Common myeloid progenitor, CD34-positive (primary cell): ENCODE measurements at regions of chr20 and their contacts with region 1.

Region 1: GRCh38 chr20:24992487-24993205 is at the start of gene APMAP:
- DNase-seq: peak; percentile 93 to 96 (median 95)
- H3K4me3 ChIP-seq: peak within 1 kb of the TSS; percentile 48 to 93 (median 87)
- H3K27ac ChIP-seq: peak within 1 kb of the TSS; percentile 51 to 86
- H3K4me1 ChIP-seq: peaks cover 2 to 46% (median 35%) of the 10 kb centered on the region in 4 experiments
- H3K27me3 ChIP-seq: no peaks in the 10 kb centered on the region

Region 2: GRCh38 chr20:24934101-24934661 is 58.5 kb before region 1 on chr20:
- CTCF ChIA-PET with region 1: interaction called, 10 read pairs
- POLR2A ChIA-PET with region 1: interaction called, 3 read pairs
- DNase-seq: no peak
- H3K4me3 ChIP-seq: no peak overlapping the region
- H3K27ac ChIP-seq: no peak overlapping the region
- H3K4me1 ChIP-seq: peaks cover 0 to 40% (median 31%) of the 10 kb centered on the region in 4 experiments
- H3K27me3 ChIP-seq: no peaks in the 10 kb centered on the region

Region 3: DNA sequence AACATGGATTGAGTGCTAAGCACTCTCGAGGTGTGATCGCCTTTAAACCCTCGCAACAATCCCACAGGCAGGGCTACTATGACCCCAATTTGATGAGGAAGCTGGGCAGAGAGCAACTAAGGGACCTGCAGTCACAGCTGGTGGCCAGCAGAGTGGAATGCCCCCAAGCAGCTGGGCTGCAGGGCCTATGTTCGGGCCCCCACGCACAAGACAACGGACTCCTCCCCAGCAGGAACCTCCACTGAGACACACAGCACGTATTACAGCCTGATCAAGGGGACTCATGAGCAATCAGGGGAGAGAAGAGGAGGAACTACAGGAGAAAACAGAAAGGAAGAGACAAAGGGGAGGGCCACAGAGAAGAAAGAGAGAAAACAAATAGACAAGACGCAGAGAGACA is 21.9 kb before region 1 on chr20:
- CTCF ChIA-PET with region 1: no interaction called
- POLR2A ChIA-PET with region 1: no interaction called
- DNase-seq: no peak
- H3K4me3 ChIP-seq: no peak overlapping the region
- H3K27ac ChIP-seq: no peak overlapping the region
- H3K4me1 ChIP-seq: no peaks in the 10 kb centered on the region
- H3K27me3 ChIP-seq: no peaks in the 10 kb centered on the region

Region 4: GRCh38 chr20:25005220-25005619 is 12.6 kb after region 1 on chr20:
- CTCF ChIA-PET with region 1: interaction called, 22 read pairs
- POLR2A ChIA-PET with region 1: no interaction called
- DNase-seq: no peak
- H3K4me3 ChIP-seq: no peak overlapping the region
- H3K27ac ChIP-seq: no peak overlapping the region
- H3K4me1 ChIP-seq: peaks cover 0 to 5% (median 2%) of the 10 kb centered on the region in 4 experiments
- H3K27me3 ChIP-seq: no peaks in the 10 kb centered on the region

Region 5: GRCh38 chr20:25022687-25023086 is 30.0 kb after region 1 on chr20:
- CTCF ChIA-PET with region 1: interaction called, 10 read pairs
- POLR2A ChIA-PET with region 1: no interaction called
- DNase-seq: no peak
- H3K4me3 ChIP-seq: no peak overlapping the region
- H3K27ac ChIP-seq: no peak overlapping the region
- H3K4me1 ChIP-seq: peaks cover 0 to 10% (median 8%) of the 10 kb centered on the region in 4 experiments
- H3K27me3 ChIP-seq: no peaks in the 10 kb centered on the region

Region 6: DNA sequence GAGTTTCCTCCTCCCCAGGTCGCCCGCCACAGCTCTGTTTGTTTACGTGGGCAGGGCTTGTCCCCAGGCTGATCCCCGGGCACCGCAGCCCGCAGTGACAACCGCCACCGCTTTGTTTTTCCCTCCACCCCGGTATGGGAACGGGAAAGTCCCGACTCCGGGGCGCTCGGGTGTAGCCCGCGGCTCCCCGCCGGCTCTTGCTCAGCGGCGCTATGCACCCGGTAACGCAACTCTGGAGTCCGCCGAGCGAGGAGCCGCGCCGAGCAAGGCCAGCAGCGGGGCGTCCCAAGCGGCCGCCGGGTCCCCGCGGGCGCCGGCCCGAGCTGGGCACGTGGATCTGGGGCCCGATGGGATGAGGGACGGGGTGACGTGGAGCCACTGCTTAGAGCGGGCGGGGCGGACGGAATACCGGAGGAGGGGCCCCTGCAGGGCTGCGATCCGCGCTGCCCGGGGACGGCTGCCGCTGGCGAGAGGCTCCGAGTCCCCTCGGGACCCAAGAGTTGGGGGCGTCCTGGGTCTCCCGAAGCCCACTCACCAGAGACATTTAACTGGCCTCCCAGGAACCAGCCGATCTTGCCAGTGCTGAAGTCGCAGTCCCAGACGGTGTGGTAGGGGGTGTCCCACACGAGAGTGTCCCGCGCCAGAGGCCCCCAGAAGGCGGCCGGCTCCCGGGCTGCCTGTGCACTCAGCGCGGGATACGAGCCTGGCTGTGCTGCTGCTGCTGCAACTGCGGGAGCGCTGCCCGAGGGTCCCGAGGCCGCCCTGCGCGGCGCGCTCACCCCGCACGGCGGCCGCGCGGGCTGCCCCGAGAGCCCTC is 64.8 kb after region 1 on chr20:
- CTCF ChIA-PET with region 1: interaction called, 160 read pairs
- POLR2A ChIA-PET with region 1: interaction called, 3 read pairs
- DNase-seq: peak; percentile 69 to 89 (median 88)
- H3K4me3 ChIP-seq: peak overlapping the region; percentile 67 to 87 (median 75)
- H3K27ac ChIP-seq: peak overlapping the region; percentile 64 to 74
- H3K4me1 ChIP-seq: peaks cover 9 to 65% (median 59%) of the 10 kb centered on the region in 4 experiments
- H3K27me3 ChIP-seq: peaks cover 0 to 5% (median 0%) of the 10 kb centered on the region in 5 experiments

Region 7: GRCh38 chr20:25065625-25066338 is 73.1 kb after region 1 on chr20:
- CTCF ChIA-PET with region 1: interaction called, 160 read pairs
- POLR2A ChIA-PET with region 1: interaction called, 3 read pairs
- DNase-seq: peak; percentile 73 to 85 (median 80)
- H3K4me3 ChIP-seq: no peak overlapping the region
- H3K27ac ChIP-seq: no peak overlapping the region
- H3K4me1 ChIP-seq: no peaks in the 10 kb centered on the region
- H3K27me3 ChIP-seq: peaks cover 0 to 18% (median 10%) of the 10 kb centered on the region in 5 experiments

Region 8: GRCh38 chr20:25076731-25077609 is 84.3 kb after region 1 on chr20:
- CTCF ChIA-PET with region 1: interaction called, 16 read pairs
- POLR2A ChIA-PET with region 1: no interaction called
- DNase-seq: peak in 2 of 3 donors; percentile 43 to 58
- H3K4me3 ChIP-seq: peak overlapping the region in 2 of 7 experiments; percentile 11 to 51
- H3K27ac ChIP-seq: no peak overlapping the region
- H3K4me1 ChIP-seq: peaks cover 0 to 18% (median 7%) of the 10 kb centered on the region in 4 experiments
- H3K27me3 ChIP-seq: peaks cover 18 to 90% (median 48%) of the 10 kb centered on the region in 5 experiments

Region 9: DNA sequence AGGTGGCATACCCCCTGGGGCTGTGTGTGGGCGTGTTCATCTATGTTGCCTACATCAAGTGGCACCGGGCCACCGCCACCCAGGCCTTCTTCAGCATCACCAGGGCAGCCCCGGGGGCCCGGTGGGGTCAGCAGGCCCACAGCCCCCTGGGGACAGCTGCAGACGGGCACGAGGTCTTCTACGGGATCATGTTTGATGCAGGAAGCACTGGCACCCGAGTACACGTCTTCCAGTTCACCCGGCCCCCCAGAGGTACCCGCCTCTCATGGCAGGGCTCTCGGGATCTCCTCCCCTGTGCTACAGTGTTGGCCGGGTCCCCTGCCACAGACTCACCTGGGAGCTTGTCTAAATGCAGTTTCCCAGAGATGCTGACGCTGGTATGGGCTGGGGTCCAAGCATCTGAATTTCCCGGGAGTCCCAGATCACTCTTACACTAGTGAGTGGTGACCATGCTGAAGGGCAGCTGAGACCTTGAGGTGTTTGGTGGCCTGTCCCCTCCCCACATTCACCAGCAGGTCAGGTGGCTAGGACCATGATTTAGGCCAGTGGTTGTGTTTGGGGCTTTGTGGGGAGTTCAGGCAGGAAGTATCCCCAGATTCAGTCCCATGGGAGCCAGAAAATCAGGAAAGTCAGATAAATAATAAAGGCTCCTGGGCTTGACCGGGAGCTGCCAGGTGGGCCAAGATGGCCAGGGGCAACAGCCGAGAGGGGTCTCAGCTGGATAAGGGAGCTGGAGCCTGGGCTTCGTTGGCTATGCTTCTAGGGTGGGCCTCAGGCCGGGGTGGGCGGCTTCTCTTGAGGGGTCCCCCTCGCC is 214.7 kb after region 1 on chr20:
- CTCF ChIA-PET with region 1: no interaction called
- POLR2A ChIA-PET with region 1: no interaction called
- DNase-seq: no peak
- H3K4me3 ChIP-seq: no peak overlapping the region
- H3K27ac ChIP-seq: no peak overlapping the region
- H3K4me1 ChIP-seq: peaks cover 3 to 24% (median 18%) of the 10 kb centered on the region in 4 experiments
- H3K27me3 ChIP-seq: no peaks in the 10 kb centered on the region